ENCODE measurements at regions of chr1 and their contacts with region 1.

Region 1: DNA sequence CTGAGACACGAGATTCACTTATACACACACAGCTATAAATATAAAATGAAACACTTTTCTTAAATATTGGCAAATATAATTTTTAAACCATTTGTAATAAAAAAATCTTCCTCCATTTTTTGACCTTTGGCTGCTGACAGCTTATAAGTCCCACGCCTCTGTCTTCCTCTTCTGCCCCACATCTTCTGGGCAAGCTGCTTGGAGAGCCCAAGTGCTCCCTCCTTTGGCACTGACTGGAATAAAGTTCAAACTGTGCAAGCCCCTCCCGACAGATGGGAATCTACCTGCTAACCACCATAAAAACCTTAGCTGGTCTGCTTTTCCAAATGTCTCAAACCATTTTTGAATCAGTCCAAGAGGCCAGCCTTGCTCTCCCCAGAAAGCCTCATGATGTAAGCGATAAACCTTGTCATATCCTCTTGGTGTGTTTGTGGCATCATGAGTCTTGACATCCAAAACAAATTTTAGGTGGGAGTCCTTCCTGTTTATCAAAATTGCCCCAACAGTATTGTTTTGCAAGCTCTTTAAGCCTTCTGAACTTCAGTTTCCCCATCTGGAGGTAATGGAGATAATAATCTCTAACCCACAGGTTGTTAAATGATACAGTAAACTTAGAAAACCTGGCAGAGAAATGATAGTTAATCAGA is 99.8 kb downstream of the SNX7 start:
- DNase-seq: no peak

Region 2: DNA sequence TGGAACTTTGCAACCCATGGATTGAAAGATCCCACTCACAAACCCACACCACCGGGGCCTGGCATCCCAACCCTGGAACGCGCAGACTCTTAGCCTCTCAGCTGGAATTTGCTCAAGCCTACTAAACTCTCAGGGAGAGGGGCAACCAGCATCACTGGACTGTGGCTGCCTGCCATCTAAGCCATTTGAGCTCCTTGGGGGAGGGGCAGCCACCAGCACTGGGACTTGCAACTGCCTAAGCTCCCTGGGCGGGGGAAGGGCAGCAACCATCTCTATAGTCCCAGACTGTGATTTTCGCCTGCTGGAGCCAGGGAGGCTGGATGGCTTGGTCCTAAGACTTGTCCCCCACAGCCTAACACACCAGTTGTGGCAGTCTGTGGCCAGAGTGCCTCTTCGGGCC is 22.5 kb after region 1 on chr1:
- intact Hi-C with region 1: loop called in 1 of 2 experiments (anchors 1 kb)
- DNase-seq: no peak

Measured in posterior vena cava (tissue), 2 donors.